Activated T-helper 1 cell treated with anti-CD3 and anti-CD28 coated beads, Interleukin-12 subunit alpha, Interleukin-12 subunit beta, Interleukin-2, Interleukin-4 antibody, amounts not matched to agents 30 ng/mL and 10 ng/mL and 1 ng/mL, durations not matched to agents 14 hours and 24 hours and 36 hours (primary cell): ENCODE measurements at regions of chr4 and their contacts with region 1.

Region 1: DNA sequence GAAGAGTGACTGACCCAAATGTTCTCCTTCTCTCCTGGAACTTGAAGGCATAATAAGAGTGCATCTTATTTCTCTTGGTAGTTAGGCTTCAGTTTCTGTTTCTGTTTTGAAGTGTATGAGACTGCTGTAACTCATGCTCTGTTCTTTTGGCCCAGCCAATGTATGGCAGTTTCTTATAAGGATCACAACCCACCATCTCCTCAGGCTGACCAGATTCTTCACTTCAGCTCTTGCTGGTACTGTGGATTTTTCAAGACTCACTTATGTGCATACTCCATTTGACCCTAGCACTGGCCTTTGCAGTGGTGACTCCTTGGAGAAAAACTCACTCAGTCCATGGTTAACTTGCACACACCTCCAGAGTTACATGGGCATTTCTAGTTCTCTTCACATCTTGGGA is 9.6 kb upstream of the YTHDC1 start:
- DNase-seq: no peak
- H3K4me3 Mint-ChIP-seq: no peak overlapping the region
- H3K27ac Mint-ChIP-seq: peak overlapping the region; percentile 48
- H3K4me1 Mint-ChIP-seq: peaks cover 11% of the 10 kb centered on the region
- H3K27me3 Mint-ChIP-seq: peaks cover 12% of the 10 kb centered on the region

Region 2: GRCh38 chr4:68141852-68142251 is 217.7 kb before region 1 on chr4:
- intact Hi-C with region 1: no loop called
- DNase-seq: no peak
- H3K4me3 Mint-ChIP-seq: no peak overlapping the region
- H3K27ac Mint-ChIP-seq: no peak overlapping the region
- H3K4me1 Mint-ChIP-seq: no peaks in the 10 kb centered on the region
- H3K27me3 Mint-ChIP-seq: peaks cover 6% of the 10 kb centered on the region

Region 3: GRCh38 chr4:68375667-68376559 is 16.4 kb after region 1 on chr4:
- intact Hi-C with region 1: loop called (anchors 1 kb)
- DNase-seq: peak; percentile 38
- H3K4me3 Mint-ChIP-seq: peak overlapping the region; percentile 65
- H3K27ac Mint-ChIP-seq: no peak overlapping the region
- H3K4me1 Mint-ChIP-seq: peaks cover 23% of the 10 kb centered on the region
- H3K27me3 Mint-ChIP-seq: peaks cover 30% of the 10 kb centered on the region